CD4-positive, alpha-beta memory T cell (primary cell): ENCODE measurements at regions of chr3 and their contacts with region 1.

Region 1: DNA sequence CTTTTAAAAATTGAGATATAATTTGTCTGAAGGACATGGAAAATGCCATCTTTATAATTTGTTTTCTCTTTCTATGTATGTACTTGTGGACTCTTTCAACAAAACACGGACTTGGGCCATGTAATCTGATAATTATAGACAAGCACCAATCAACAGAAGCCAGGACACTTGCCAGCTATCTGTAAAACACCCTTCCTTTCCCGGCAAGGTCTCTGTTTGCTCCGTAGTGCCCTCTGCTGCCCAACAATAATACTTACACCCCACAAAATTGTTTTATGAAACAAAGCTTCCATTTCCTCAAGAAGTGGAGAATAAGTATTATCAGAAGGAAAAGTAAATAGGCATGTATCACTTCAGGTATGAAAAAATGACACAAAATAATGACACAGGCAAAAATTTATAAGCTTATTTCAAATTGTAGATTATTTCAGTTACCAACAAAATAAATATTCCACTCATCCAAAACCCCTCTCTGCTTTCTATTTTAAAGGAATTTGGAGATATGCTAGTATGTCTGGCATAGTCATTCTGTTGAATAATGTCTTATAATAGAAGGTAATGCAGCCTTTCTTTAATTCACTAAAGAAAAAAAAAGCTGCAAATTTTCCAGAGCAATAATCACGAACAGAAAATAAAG is 32.8 kb downstream of the MYH15 start:
- DNase-seq: peak; percentile 45 to 57 (median 53)
- H3K4me3 ChIP-seq: no peak overlapping the region
- H3K4me3 Mint-ChIP-seq: no peak overlapping the region
- H3K27ac ChIP-seq: no peak overlapping the region
- H3K27ac Mint-ChIP-seq: no peak overlapping the region
- H3K4me1 ChIP-seq: no peaks in the 10 kb centered on the region
- H3K4me1 Mint-ChIP-seq: peaks cover 0 to 3% (median 2%) of the 10 kb centered on the region in 4 donors
- H3K27me3 ChIP-seq: no peaks in the 10 kb centered on the region
- H3K27me3 Mint-ChIP-seq: peaks cover 3 to 4% of the 10 kb centered on the region in 2 donors

Region 2: GRCh38 chr3:107690522-107691138 is 787.0 kb before region 1 on chr3:
- CTCF ChIA-PET with region 1: interaction called, 3 read pairs
- POLR2A ChIA-PET with region 1: no interaction called
- intact Hi-C with region 1: loop called (anchors 5 kb)
- DNase-seq: peak in 4 of 5 donors; percentile 28 to 42 (median 34)
- H3K4me3 ChIP-seq: no peak overlapping the region
- H3K4me3 Mint-ChIP-seq: no peak overlapping the region
- H3K27ac ChIP-seq: no peak overlapping the region
- H3K27ac Mint-ChIP-seq: peak overlapping the region in 1 of 7 donors; percentile 83
- H3K4me1 ChIP-seq: peaks cover 11% of the 10 kb centered on the region
- H3K4me1 Mint-ChIP-seq: peaks cover 9 to 20% (median 12%) of the 10 kb centered on the region in 4 donors
- H3K27me3 ChIP-seq: no peaks in the 10 kb centered on the region
- H3K27me3 Mint-ChIP-seq: no peaks in the 10 kb centered on the region

Region 3: GRCh38 chr3:107938143-107938542 is 539.5 kb before region 1 on chr3:
- CTCF ChIA-PET with region 1: interaction called, 7 read pairs
- POLR2A ChIA-PET with region 1: no interaction called
- intact Hi-C with region 1: loop called (anchors 1 kb)
- DNase-seq: peak in 3 of 5 donors; percentile 10 to 23 (median 15)
- H3K4me3 ChIP-seq: no peak overlapping the region
- H3K4me3 Mint-ChIP-seq: no peak overlapping the region
- H3K27ac ChIP-seq: no peak overlapping the region
- H3K27ac Mint-ChIP-seq: no peak overlapping the region
- H3K4me1 ChIP-seq: peaks cover 15% of the 10 kb centered on the region
- H3K4me1 Mint-ChIP-seq: peaks cover 11 to 21% (median 16%) of the 10 kb centered on the region in 4 donors
- H3K27me3 ChIP-seq: no peaks in the 10 kb centered on the region
- H3K27me3 Mint-ChIP-seq: peaks cover 1 to 11% of the 10 kb centered on the region in 2 donors

Region 4: GRCh38 chr3:108053067-108053466 is 424.6 kb before region 1 on chr3:
- CTCF ChIA-PET with region 1: no interaction called
- POLR2A ChIA-PET with region 1: no interaction called
- intact Hi-C with region 1: loop called (anchors 10 kb)
- DNase-seq: no peak
- H3K4me3 ChIP-seq: no peak overlapping the region
- H3K4me3 Mint-ChIP-seq: no peak overlapping the region
- H3K27ac ChIP-seq: no peak overlapping the region
- H3K27ac Mint-ChIP-seq: peak overlapping the region in 6 of 7 donors; percentile 2 to 68 (median 26)
- H3K4me1 ChIP-seq: peaks cover 23% of the 10 kb centered on the region
- H3K4me1 Mint-ChIP-seq: peaks cover 33 to 47% (median 38%) of the 10 kb centered on the region in 4 donors
- H3K27me3 ChIP-seq: no peaks in the 10 kb centered on the region
- H3K27me3 Mint-ChIP-seq: no peaks in the 10 kb centered on the region

Region 5: DNA sequence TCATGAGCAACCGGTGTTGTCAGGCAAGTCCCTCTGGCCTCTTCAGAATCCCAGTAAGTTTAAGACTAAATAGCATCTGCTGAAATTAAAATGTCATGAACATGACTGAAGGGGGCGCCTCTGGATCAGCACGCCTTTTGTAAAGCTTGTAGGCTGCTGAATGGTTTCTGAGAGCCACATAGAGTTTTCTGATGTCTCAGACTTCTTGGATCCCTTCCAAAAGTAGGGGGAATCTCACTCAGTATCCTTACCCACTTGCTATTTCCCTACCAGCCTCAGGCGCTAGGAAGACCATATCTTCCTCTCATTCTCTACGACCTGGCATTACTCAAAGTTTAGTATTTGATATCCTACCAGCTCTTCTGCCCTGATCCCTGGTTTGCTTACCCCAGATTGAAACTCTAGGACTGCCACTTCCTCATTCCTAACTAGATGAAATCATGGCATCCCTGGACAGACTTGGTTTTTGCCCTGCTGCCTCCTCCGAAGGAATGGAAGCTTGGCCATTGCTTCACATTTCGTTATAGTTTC is 324.1 kb before region 1 on chr3:
- CTCF ChIA-PET with region 1: interaction called, 12 read pairs
- POLR2A ChIA-PET with region 1: no interaction called
- intact Hi-C with region 1: loop called (anchors 1 kb)
- DNase-seq: peak; percentile 38 to 46 (median 43)
- H3K4me3 ChIP-seq: no peak overlapping the region
- H3K4me3 Mint-ChIP-seq: no peak overlapping the region
- H3K27ac ChIP-seq: no peak overlapping the region
- H3K27ac Mint-ChIP-seq: peak overlapping the region in 3 of 7 donors; percentile 14 to 45 (median 29)
- H3K4me1 ChIP-seq: no peaks in the 10 kb centered on the region
- H3K4me1 Mint-ChIP-seq: peaks cover 5 to 14% (median 12%) of the 10 kb centered on the region in 4 donors
- H3K27me3 ChIP-seq: no peaks in the 10 kb centered on the region
- H3K27me3 Mint-ChIP-seq: no peaks in the 10 kb centered on the region